ENCODE measurements at regions of chr10 and their contacts with region 1.

Region 1: GRCh38 chr10:101214446-101215396 is 14.5 kb downstream of the LBX1 start:
- DNase-seq: peak; percentile 58 to 72 (median 64)
- ATAC-seq: peak; percentile 68
- H3K4me3 ChIP-seq: no peak overlapping the region
- H3K27ac ChIP-seq: no peak overlapping the region
- H3K4me1 ChIP-seq: peaks cover 47% of the 10 kb centered on the region
- H3K27me3 ChIP-seq: peaks cover 0 to 59% of the 10 kb centered on the region in 2 donors
- CTCF ChIP-seq: peak; percentile 61 to 93 (median 78)
- POLR2A ChIP-seq: no peak

Region 2: GRCh38 chr10:101341438-101341837 is 126.7 kb after region 1 on chr10:
- intact Hi-C with region 1: no loop called
- DNase-seq: no peak
- ATAC-seq: no peak
- H3K4me3 ChIP-seq: no peak overlapping the region
- H3K27ac ChIP-seq: no peak overlapping the region
- H3K4me1 ChIP-seq: no peaks in the 10 kb centered on the region
- H3K27me3 ChIP-seq: no peaks in the 10 kb centered on the region
- CTCF ChIP-seq: no peak
- POLR2A ChIP-seq: no peak

Region 3: DNA sequence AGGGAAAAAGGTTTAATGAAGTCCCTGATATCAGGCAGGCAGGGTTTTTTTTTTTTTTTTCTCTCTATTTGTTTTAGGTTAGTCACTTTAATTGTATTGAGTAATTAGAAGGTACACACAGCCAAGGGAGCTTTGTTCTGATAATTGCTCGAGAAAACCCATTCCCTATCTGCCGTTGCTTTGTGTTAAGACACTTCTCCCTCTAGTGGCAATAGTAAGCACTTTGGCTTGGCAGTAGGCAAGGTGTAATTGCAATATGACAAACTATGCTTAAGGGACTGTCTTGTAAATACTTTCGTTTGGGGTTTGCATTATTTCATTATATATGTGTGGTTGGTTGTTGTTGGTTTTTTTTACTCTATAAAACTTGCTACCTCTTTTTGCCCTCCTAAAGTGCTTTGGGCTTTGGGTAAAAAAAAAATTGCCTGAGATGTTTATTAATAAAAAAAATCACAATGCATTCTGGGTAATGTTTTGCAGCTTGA is 252.6 kb after region 1 on chr10:
- intact Hi-C with region 1: loop called (anchors 10 kb)
- DNase-seq: peak; percentile 22 to 68 (median 49)
- ATAC-seq: peak; percentile 86
- H3K4me3 ChIP-seq: no peak overlapping the region
- H3K27ac ChIP-seq: no peak overlapping the region
- H3K4me1 ChIP-seq: no peaks in the 10 kb centered on the region
- H3K27me3 ChIP-seq: no peaks in the 10 kb centered on the region
- CTCF ChIP-seq: peak; percentile 32 to 88 (median 80)
- POLR2A ChIP-seq: no peak

Region 4: DNA sequence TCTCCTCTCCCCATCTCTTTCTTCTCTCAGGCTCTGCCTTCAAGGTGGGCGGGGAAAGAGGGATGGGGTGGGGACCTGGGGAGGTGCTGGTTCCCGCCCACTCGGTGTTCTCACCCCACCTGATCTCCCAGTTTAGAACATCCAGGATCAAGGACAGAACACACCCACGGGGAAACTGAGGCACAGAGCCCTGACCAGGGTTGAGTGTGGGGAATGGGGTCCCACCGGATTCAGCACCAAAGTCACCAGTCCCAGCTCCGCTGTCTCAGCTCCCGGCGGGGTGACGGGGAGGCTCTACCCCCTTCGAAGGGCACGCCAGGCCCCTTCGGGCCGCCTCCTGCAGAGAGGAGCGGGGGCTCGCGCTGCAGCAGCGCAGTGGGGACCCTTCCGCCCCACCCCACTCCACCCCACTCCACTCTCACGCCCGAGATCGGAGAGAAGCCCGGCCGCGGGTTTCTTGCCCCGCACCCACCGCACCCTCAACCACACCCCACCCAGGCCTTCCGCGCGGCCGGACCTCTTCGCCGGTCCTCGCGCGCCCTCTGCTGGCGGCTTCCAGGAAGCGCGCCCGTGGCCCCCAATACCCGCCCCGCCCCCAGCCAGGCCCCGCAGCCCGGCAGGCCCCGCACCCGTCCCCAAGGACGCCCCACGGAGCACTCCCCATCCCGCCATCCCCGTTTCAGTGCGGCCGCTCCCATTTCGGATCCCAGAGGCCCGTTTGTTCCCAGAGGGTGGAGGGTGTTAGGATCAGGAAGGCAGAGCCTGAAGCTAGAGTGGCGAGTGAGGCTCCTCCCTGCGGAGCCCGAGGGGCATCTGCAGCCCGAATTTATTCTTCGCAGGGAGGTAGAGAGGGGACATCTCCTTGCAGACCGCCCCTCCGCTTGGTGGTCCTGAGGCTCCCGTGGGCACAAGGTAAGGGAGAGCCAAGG is 355.4 kb after region 1 on chr10:
- intact Hi-C with region 1: loop called (anchors 5 kb)
- DNase-seq: peak; percentile 77 to 88 (median 80)
- ATAC-seq: peak; percentile 79
- H3K4me3 ChIP-seq: no peak overlapping the region
- H3K27ac ChIP-seq: no peak overlapping the region
- H3K4me1 ChIP-seq: peaks cover 26% of the 10 kb centered on the region
- H3K27me3 ChIP-seq: peaks cover 0 to 16% of the 10 kb centered on the region in 2 donors
- CTCF ChIP-seq: peak; percentile 66 to 94 (median 88)
- POLR2A ChIP-seq: no peak

Region 5: GRCh38 chr10:101595591-101596433 is 381.1 kb after region 1 on chr10:
- intact Hi-C with region 1: no loop called
- DNase-seq: no peak
- ATAC-seq: no peak
- H3K4me3 ChIP-seq: no peak overlapping the region
- H3K27ac ChIP-seq: no peak overlapping the region
- H3K4me1 ChIP-seq: no peaks in the 10 kb centered on the region
- H3K27me3 ChIP-seq: no peaks in the 10 kb centered on the region
- CTCF ChIP-seq: no peak
- POLR2A ChIP-seq: no peak

Region 6: DNA sequence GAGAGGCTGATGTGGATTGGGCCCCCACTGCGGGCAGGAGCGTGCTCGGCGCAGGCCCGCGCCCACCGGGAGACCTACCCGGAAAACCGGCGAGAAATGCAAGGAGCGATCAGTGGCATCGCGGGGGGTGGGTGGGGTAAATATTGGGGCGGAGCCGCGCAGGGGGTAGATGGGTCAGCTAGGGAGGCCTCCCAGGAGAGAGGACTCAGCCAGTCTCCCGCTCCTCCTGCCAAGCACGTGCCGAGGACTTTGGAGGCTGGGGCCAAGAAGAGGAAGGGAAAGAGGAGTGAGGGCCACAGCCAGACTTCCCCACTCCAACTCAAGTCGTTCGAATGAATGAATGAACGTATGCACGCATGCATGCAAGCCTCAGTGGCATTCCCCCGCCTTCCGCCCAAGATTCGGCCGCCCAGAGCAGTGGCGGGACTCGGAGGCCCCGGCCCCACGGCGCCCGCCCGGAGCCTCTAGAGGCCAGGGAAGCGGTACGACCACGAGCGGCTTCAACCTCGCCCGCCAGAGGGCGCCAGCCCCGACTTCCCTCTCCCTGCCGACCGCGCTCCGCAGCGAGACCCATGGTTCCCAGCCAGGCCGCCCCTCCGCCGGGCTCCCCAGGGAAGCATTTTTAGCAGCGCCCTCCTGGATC is 564.9 kb after region 1 on chr10:
- intact Hi-C with region 1: loop called (anchors 10 kb)
- DNase-seq: peak; percentile 80 to 86 (median 83)
- ATAC-seq: peak; percentile 68
- H3K4me3 ChIP-seq: peak overlapping the region in 1 of 2 donors; percentile 14
- H3K27ac ChIP-seq: no peak overlapping the region
- H3K4me1 ChIP-seq: peaks cover 63% of the 10 kb centered on the region
- H3K27me3 ChIP-seq: peaks cover 0 to 21% of the 10 kb centered on the region in 2 donors
- CTCF ChIP-seq: peak; percentile 75 to 93 (median 82)
- POLR2A ChIP-seq: no peak

Measured in body of pancreas (tissue), 4 donors.